Activated CD4-positive, alpha-beta T cell treated with anti-CD3 and anti-CD28 coated beads for 36 hours (primary cell): ENCODE measurements at regions of chr2 and their contacts with region 1.

Region 1: GRCh38 chr2:99180755-99181623 is at the starts of genes MITD1 and MRPL30:
- DNase-seq: peak; percentile 93
- ATAC-seq: peak; percentile 93
- H3K4me3 Mint-ChIP-seq: peak within 1 kb of the TSS; percentile 96
- H3K27ac Mint-ChIP-seq: peak within 1 kb of the TSS; percentile 99
- H3K4me1 Mint-ChIP-seq: peaks cover 57% of the 10 kb centered on the region
- H3K27me3 Mint-ChIP-seq: no peaks in the 10 kb centered on the region
- total RNA-seq, gene MITD1: 66.3 to 70.9 TPM
- total RNA-seq, gene MRPL30: 30.8 to 31.2 TPM

Region 2: GRCh38 chr2:98649135-98649991 is 531.6 kb before region 1 on chr2:
- CTCF ChIA-PET with region 1: interaction called, 4 read pairs
- POLR2A ChIA-PET with region 1: no interaction called
- intact Hi-C with region 1: loop called in 1 of 2 experiments (anchors 1 kb)
- DNase-seq: peak; percentile 88
- ATAC-seq: peak; percentile 93
- H3K4me3 Mint-ChIP-seq: no peak overlapping the region
- H3K27ac Mint-ChIP-seq: peak overlapping the region; percentile 73
- H3K4me1 Mint-ChIP-seq: peaks cover 58% of the 10 kb centered on the region
- H3K27me3 Mint-ChIP-seq: no peaks in the 10 kb centered on the region

Region 3: DNA sequence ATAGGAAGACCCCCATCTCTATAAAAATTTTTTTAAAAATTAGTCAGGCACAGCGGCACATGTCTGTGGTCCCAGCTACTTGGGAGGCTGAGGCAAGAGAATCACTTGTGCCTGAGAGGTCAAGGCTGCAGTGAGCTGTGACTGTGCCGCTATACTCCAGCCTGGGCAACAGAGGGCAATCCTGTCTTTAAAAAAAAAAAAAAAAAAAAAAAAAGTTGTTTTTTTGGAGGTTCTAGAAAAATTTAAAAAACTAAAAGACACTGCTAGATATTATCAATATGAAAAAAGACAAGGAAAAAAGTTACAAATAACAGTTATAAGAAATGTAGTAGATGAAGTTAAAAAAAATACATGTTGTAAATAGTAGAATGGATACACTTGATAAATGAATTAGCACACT is 95.6 kb before region 1 on chr2:
- CTCF ChIA-PET with region 1: interaction called, 3 read pairs
- POLR2A ChIA-PET with region 1: no interaction called
- intact Hi-C with region 1: loop called (anchors 1 to 2 kb)
- DNase-seq: peak; percentile 40
- ATAC-seq: no peak
- H3K4me3 Mint-ChIP-seq: no peak overlapping the region
- H3K27ac Mint-ChIP-seq: no peak overlapping the region
- H3K4me1 Mint-ChIP-seq: peaks cover 4% of the 10 kb centered on the region
- H3K27me3 Mint-ChIP-seq: peaks cover 8% of the 10 kb centered on the region

Region 4: DNA sequence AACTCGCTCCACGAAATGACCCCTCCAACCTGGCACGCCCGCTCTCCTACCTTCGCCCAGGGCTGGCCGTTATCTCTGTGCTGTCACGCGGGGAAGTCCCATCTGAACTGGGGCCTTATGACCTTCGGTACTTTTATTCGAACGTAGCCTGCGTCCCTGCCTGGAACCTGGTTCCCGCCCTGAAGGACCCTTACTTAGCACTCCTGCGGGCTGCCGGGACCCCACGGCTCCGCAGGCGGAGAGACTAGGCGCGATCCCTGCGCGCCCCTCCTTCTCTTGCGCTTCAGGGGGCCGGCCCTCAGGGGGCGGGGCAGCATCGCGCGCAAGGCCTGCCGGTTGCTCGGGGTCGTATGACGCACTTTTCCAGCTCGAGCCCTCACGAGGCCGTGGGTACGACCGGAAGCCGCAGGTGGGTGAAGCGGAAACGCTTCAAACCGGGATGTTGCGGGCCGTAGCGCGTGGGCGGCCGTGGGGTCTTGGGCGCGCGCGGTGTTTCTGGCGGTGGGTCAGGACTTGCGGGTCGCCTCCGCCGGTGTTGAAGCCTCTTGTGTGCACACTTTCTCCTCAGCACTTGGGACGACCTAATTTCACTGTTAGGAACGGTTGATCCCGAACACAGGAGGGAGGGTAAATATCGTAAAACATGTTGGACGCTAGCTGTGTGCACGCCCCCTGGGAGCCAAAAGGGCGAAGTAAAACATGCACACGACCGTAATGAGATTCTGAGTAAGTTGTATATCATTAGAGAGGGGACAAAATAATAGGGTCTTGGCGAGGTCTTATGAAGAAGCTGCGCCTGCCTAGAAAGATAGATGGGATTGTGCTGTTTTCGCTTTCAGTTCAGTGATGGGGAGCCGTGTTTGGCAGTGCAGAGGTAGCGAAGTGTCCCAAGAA is 26.1 kb before region 1 on chr2 and contains the starts of genes LIPT1 and TSGA10:
- CTCF ChIA-PET with region 1: interaction called, 5 read pairs
- POLR2A ChIA-PET with region 1: interaction called, 3 read pairs
- intact Hi-C with region 1: loop called (anchors 1 kb)
- DNase-seq: peak; percentile 96
- ATAC-seq: peak; percentile 94
- H3K4me3 Mint-ChIP-seq: no peak within 1 kb of the TSS
- H3K27ac Mint-ChIP-seq: peak within 1 kb of the TSS; percentile 93
- H3K4me1 Mint-ChIP-seq: peaks cover 36% of the 10 kb centered on the region
- H3K27me3 Mint-ChIP-seq: no peaks in the 10 kb centered on the region
- total RNA-seq, gene LIPT1: 4.6 to 4.7 TPM
- total RNA-seq, gene TSGA10: 6.4 to 9.4 TPM

Region 5: DNA sequence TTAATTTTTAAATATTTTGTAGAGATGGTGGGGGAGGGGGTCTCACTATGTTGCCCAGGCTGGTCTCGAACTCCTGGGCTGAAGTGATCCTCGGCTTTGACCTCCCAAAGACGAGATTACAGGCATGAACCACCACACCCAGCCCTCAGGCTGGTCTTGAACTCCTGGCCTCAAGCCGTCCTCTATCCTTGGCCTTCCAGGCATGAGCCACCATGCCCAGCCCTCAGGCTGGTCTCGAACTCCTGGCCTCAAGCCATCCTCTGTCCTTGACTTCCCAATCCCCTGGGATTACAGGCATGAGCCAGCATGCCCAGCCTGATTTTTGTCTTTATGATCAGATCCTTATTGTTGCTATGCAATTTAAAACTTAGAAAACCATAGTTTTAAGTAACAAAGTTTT is 130.5 kb after region 1 on chr2:
- CTCF ChIA-PET with region 1: no interaction called
- POLR2A ChIA-PET with region 1: no interaction called
- intact Hi-C with region 1: no loop called
- DNase-seq: no peak
- ATAC-seq: no peak
- H3K4me3 Mint-ChIP-seq: no peak overlapping the region
- H3K27ac Mint-ChIP-seq: no peak overlapping the region
- H3K4me1 Mint-ChIP-seq: no peaks in the 10 kb centered on the region
- H3K27me3 Mint-ChIP-seq: no peaks in the 10 kb centered on the region

Region 6: GRCh38 chr2:99414566-99414965 is 233.6 kb after region 1 on chr2:
- CTCF ChIA-PET with region 1: no interaction called
- POLR2A ChIA-PET with region 1: no interaction called
- intact Hi-C with region 1: loop called in 1 of 2 experiments (anchors 5 kb)
- DNase-seq: no peak
- ATAC-seq: no peak
- H3K4me3 Mint-ChIP-seq: no peak overlapping the region
- H3K27ac Mint-ChIP-seq: peak overlapping the region; percentile 9
- H3K4me1 Mint-ChIP-seq: no peaks in the 10 kb centered on the region
- H3K27me3 Mint-ChIP-seq: no peaks in the 10 kb centered on the region